SK-N-SH (cell line): ENCODE measurements at regions of chr11 and their contacts with region 1.

Region 1: GRCh38 chr11:63838678-63839507 is at the start of gene MARK2:
- DNase-seq: peak; percentile 98
- H3K4me3 ChIP-seq: peak within 1 kb of the TSS; percentile 77 to 83
- H3K27ac ChIP-seq: peak within 1 kb of the TSS; percentile 46 to 78; a peak in 3 of 4 replicates
- H3K4me1 ChIP-seq: peaks cover 12 to 28% of the 10 kb centered on the region in 2 experiments; a peak in 3 of 4 replicates
- H3K27me3 ChIP-seq: no peaks in the 10 kb centered on the region
- CTCF ChIP-seq: no peak
- EP300 ChIP-seq: no peak
- RAD21 ChIP-seq: no peak
- polyA plus RNA-seq, gene MARK2: 14.6 and 18.8 TPM in 2 replicates

Region 2: DNA sequence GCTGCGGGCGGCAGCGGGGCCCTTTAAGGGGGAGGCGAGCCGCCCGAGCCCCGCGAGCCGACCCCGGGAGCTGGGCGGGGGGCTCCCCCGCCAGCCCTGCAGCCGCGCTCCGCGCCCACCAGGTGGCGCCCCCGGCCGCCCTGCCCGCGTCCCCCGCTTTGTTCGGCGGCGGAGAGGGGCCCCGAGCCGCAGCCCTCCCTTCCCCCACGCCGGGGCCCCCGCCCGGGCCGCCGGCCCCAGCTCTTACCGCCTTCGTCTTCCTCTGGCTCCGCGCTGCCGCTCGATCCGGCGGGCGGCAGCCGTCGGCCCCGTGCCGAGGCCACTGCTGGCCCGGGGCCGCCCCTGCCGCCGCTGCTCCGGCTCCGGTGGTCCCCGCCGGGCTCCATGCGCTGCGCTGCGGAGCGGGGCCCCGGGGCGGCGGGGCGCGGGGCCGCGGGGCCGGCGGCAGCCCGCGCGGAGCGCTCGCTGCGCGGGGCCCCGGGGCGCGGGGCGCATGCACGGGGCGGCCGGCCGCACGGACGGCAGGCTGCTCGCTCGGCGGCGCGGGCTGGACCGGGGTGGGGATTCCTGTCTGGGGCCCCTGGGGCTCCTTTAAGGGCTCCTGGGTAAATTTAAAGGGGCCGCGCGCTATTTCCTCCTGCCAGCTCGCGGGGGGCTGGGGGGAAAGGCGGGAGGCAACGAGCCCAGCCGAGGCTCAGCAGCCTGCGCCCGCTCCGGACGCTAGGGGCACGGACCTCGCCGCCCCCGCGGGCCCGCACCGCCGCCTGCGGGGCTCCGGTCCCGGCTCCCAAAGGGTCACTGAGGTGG is 70.5 kb before region 1 on chr11 and contains the start of gene ZFTA:
- CTCF ChIA-PET with region 1: interaction called, 24 read pairs
- POLR2A ChIA-PET with region 1: no interaction called
- DNase-seq: peak; percentile 98
- H3K4me3 ChIP-seq: peak within 1 kb of the TSS; percentile 78 to 89
- H3K27ac ChIP-seq: peak within 1 kb of the TSS; percentile 59 to 84
- H3K4me1 ChIP-seq: peaks cover 0 to 22% of the 10 kb centered on the region in 2 experiments; a peak in 1 of 4 replicates
- H3K27me3 ChIP-seq: no peaks in the 10 kb centered on the region
- CTCF ChIP-seq: peak; percentile 43
- EP300 ChIP-seq: no peak
- RAD21 ChIP-seq: peak; percentile 61
- polyA plus RNA-seq, gene ZFTA: 8.7 and 10.3 TPM in 2 replicates

Region 3: GRCh38 chr11:63906585-63906984 is 67.7 kb after region 1 on chr11:
- CTCF ChIA-PET with region 1: interaction called, 34 read pairs
- POLR2A ChIA-PET with region 1: interaction called, 6 read pairs
- DNase-seq: peak; percentile 81
- H3K4me3 ChIP-seq: no peak overlapping the region
- H3K27ac ChIP-seq: no peak overlapping the region; a peak in 1 of 4 replicates
- H3K4me1 ChIP-seq: peaks cover 0 to 26% of the 10 kb centered on the region in 2 experiments; a peak in 1 of 4 replicates
- H3K27me3 ChIP-seq: no peaks in the 10 kb centered on the region
- CTCF ChIP-seq: peak; percentile 21
- EP300 ChIP-seq: no peak
- RAD21 ChIP-seq: no peak; the same call in 1 of the 2 replicates

Region 4: GRCh38 chr11:63938479-63939396 is 99.8 kb after region 1 on chr11 and contains the start of gene NAA40:
- CTCF ChIA-PET with region 1: interaction called, 13 read pairs
- POLR2A ChIA-PET with region 1: interaction called, 5 read pairs
- DNase-seq: peak; percentile 99
- H3K4me3 ChIP-seq: peak within 1 kb of the TSS; percentile 69 to 79
- H3K27ac ChIP-seq: peak within 1 kb of the TSS; percentile 67 to 82
- H3K4me1 ChIP-seq: peaks cover 12% of the 10 kb centered on the region in 2 experiments; a peak in 2 of 4 replicates
- H3K27me3 ChIP-seq: no peaks in the 10 kb centered on the region
- CTCF ChIP-seq: no peak
- EP300 ChIP-seq: no peak; a peak in 1 of 4 replicates
- RAD21 ChIP-seq: no peak; the same call in 1 of the 2 replicates
- polyA plus RNA-seq, gene NAA40: 33.0 and 36.3 TPM in 2 replicates

Region 5: GRCh38 chr11:63951779-63952536 is 113.1 kb after region 1 on chr11:
- CTCF ChIA-PET with region 1: interaction called, 162 read pairs
- POLR2A ChIA-PET with region 1: no interaction called
- DNase-seq: no peak
- H3K4me3 ChIP-seq: no peak overlapping the region
- H3K27ac ChIP-seq: no peak overlapping the region
- H3K4me1 ChIP-seq: no peaks in the 10 kb centered on the region
- H3K27me3 ChIP-seq: no peaks in the 10 kb centered on the region
- CTCF ChIP-seq: no peak
- EP300 ChIP-seq: no peak
- RAD21 ChIP-seq: no peak

Region 6: GRCh38 chr11:64067230-64067993 is 228.5 kb after region 1 on chr11:
- CTCF ChIA-PET with region 1: no interaction called
- POLR2A ChIA-PET with region 1: no interaction called
- DNase-seq: peak; percentile 68
- H3K4me3 ChIP-seq: no peak overlapping the region
- H3K27ac ChIP-seq: peak overlapping the region in 1 of 2 experiments; percentile 90; a peak in 2 of 4 replicates
- H3K4me1 ChIP-seq: peaks cover 0 to 81% of the 10 kb centered on the region in 2 experiments; a peak in 2 of 4 replicates
- H3K27me3 ChIP-seq: no peaks in the 10 kb centered on the region
- CTCF ChIP-seq: no peak
- EP300 ChIP-seq: no peak
- RAD21 ChIP-seq: no peak

Region 7: DNA sequence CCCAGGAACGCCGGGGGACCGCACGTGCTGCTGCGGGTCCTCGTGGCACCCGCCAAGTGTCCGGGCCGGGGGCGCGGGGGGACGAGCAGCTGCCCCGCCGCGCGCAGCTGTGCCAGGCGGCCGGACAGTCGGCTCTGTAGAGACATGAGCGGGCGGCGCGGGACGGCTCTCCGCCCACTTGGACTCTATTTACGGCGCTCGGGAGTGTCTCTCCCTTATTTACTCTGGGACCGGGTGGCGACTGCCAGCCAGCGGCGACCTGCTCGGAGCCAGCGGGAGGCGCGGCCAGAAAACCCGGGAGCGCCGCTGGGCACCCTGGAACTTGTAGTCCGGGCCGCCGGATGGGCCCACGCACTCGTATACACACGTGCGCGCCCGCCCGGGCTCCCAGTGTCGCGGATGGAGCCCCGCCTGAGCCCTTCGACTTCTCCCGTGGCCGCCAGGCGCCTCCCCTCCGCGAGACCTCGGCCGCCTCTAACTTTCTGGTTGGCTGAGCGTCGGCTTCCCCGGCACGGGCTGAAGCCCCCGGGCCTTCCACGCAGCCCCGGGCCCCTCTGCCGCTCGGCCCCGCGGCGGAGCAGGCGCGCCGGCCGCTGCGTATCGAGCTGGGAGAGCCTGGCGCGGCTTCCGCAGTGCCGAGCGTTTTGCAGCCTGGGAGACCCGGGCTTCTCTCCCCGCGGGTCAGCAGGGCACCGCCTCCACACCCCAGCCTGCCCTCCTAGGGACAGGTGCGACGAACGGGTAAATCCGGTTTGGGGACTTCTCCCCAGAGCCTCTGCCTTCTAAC is 327.1 kb after region 1 on chr11 and contains the start of gene MACROD1:
- CTCF ChIA-PET with region 1: interaction called, 15 read pairs
- POLR2A ChIA-PET with region 1: no interaction called
- DNase-seq: peak; percentile 96
- H3K4me3 ChIP-seq: peak within 1 kb of the TSS; percentile 66 to 81
- H3K27ac ChIP-seq: peak within 1 kb of the TSS; percentile 17 to 77; a peak in 3 of 4 replicates
- H3K4me1 ChIP-seq: peaks cover 8 to 15% of the 10 kb centered on the region in 2 experiments; a peak in 3 of 4 replicates
- H3K27me3 ChIP-seq: no peaks in the 10 kb centered on the region
- CTCF ChIP-seq: no peak
- EP300 ChIP-seq: no peak
- RAD21 ChIP-seq: no peak
- polyA plus RNA-seq, gene MACROD1: 48.3 and 49.1 TPM in 2 replicates